Sciatic nerve (tissue), 2 donors: ENCODE measurements at regions of chr13 and their contacts with region 1.

Region 1: DNA sequence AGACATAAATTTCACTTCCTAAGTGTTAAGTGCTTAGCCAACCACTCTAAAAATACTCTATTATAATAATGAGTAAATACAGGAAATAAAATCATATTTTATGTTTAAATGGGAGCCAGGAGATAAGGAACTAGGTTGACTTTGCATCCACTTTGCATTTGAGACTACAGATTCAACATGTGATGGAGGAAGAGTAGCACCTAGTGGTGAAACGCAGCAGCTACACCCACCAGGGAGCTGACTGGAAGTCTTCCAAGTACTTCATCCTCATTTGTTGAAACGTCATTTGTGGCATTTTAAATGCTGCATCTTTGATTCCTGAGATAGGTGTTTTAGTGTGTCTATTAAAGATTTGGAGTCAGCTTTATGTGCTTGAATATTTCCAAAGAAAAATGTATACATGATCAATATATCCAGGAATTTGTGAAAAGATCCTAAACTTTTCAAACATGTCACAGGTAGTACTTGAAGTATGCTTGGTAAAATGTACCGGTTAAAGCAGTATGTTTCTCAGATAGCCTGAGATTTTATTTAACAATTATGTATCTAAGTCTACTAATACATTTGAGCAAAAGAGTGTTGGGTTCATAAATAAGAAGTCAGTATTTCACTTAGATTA is 17.4 kb upstream of the KCTD12 start:
- DNase-seq: peak; percentile 82
- ATAC-seq: peak; percentile 88

Region 2: DNA sequence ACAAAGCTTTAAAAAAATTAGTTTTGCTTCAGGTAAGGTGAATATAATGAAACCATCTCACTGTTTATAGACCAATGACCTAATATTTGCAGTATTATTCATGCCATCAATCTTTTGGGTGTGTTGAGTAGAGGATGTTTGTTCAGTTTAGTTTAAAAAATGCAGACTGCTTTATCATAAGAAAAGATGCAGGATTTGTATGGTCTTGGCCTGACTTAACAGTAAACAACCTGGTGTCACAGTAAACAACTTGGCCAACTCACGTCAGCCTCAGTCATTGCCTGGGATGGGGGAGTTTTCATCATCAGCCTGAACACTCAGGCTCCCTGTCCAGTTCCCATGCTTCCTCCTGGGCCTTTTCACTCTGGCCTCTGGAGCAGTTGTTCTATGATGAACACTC is 1212.5 kb before region 1 on chr13:
- intact Hi-C with region 1: loop called (anchors 10 kb)
- DNase-seq: no peak
- ATAC-seq: no peak

Region 3: GRCh38 chr13:75876360-75877050 is 1027.1 kb before region 1 on chr13:
- intact Hi-C with region 1: loop called (anchors 10 kb)
- DNase-seq: peak; percentile 76
- ATAC-seq: peak; percentile 92

Region 4: DNA sequence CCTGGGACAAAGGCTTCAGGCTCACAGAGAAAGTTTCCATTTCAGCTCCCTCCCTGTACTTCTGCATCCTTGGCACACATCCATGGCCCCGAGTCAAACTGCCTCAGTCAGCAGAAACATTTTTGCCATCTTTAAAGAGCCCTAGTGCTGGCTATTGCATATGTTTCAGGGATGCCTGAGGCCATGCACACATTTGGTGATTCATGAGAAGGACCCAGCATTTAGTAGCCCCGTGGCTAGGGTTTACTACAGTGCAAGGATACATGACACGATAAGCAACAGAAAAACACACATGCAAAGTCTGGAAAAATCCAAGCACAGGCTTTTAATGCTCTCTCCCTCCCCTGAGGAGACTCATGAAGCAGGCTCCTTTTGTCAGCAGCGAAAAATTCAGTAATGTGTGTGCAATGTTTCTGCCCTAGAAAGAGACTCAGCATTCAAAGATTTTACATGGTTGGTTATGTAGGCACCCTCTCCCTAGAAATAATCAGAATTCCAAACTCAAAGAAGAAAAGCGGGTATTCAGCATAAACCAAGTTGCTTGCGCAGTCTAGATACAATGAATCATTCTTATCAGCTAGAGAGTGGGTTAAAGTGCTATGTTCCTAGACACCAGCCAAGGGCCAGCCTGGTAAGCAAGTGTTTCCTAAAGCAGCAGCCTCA is 62.2 kb after region 1 on chr13:
- intact Hi-C with region 1: no loop called
- DNase-seq: peak; percentile 89
- ATAC-seq: peak; percentile 85